Dorsolateral prefrontal cortex (tissue), 120 donors: ENCODE measurements at regions of chr12 and their contacts with region 1.

Region 1: DNA sequence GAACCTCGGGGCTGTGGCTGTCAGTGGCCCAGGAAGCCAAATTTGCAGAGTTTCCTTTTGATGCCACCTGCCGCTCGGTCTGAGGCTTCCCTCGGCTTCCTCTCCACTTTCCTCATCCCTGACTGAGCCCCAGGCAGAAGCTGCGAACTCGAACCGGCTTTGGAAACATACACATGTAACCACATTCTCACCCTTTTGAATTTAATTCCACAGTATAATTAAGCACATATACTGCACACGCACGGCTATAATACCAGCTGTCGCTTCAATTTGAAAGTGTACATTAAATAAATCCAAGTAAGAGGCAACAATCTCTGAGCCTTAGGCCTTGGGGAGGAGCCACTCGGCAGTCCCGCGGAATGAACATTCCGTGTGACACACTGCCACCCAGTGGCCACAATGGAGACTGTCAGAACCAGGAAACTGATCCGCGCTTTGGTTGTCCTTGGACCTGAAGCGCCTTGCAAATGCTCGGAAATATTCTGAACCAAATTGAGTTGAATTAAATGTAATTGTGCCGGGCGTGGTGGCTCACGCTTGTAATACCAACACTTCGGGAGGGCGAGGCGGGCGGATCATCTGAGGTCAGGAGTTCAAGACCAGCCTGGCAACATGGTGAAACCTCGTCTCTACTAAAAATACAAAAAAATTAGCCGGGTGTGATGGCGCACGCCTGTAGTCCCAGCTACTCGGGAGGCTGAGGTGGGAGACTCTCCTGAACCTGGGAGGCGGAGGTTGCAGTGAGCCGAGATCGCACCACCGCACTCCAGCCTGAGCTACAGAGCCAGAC is 117.9 kb upstream of the TMPO start:
- DNase-seq: peak; percentile 71 to 89 (median 82)
- H3K4me3 ChIP-seq: peak overlapping the region in 58 of 59 donors; percentile 7 to 69 (median 54)
- H3K27ac ChIP-seq: peak overlapping the region in 13 of 59 donors; percentile 12 to 76 (median 39)
- H3K27me3 ChIP-seq: no peaks in the 10 kb centered on the region
- CTCF ChIP-seq: peak; percentile 87 to 98 (median 95)

Region 2: GRCh38 chr12:96578526-96579125 is 1818.9 kb before region 1 on chr12:
- intact Hi-C with region 1: loop called in 1 of 2 experiments (anchors 5 kb)
- DNase-seq: no peak
- H3K4me3 ChIP-seq: no peak overlapping the region
- H3K27ac ChIP-seq: peak overlapping the region in 11 of 59 donors; percentile 2 to 46 (median 23)
- H3K27me3 ChIP-seq: no peaks in the 10 kb centered on the region
- CTCF ChIP-seq: peak; percentile 39 to 93 (median 72)

Region 3: GRCh38 chr12:97837401-97837800 is 560.1 kb before region 1 on chr12:
- intact Hi-C with region 1: no loop called
- DNase-seq: peak in 1 of 10 donors; percentile 34
- H3K4me3 ChIP-seq: no peak overlapping the region
- H3K27ac ChIP-seq: no peak overlapping the region
- H3K27me3 ChIP-seq: no peaks in the 10 kb centered on the region
- CTCF ChIP-seq: no peak

Region 4: DNA sequence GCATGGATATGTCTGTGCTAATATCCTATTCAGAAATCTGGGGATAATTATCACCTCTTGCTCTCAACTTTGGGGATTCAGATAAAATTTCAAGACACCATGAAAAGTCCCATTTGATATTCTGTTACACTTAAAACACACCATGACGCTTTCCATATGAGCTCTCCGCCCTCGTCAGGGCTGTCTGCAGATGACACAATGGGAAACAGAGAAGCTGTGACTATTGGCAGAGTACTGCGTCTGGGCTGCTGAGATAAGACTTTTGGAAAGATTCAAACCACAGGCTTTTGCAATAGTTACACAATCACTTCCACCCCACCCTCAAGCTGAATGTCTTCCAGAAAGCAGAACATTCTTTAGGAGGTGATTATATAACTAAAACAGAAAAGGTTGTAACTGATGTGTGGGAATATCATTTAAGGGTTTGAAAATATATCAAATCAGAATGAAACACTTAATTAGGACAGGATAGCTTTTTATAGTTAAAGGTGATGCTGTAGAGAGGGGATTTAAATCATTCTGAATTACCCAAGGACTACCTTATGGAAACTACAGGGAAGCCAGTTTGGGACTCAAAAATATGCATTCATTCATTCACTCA is 42.6 kb after region 1 on chr12:
- intact Hi-C with region 1: no loop called
- DNase-seq: peak in 6 of 10 donors; percentile 36 to 75 (median 62)
- H3K4me3 ChIP-seq: no peak overlapping the region
- H3K27ac ChIP-seq: peak overlapping the region in 55 of 59 donors; percentile 6 to 87 (median 71)
- H3K27me3 ChIP-seq: no peaks in the 10 kb centered on the region
- CTCF ChIP-seq: peak in 2 of 56 donors; percentile 6 to 10